Activated CD4-positive, alpha-beta T cell treated with anti-CD3 and anti-CD28 coated beads, Interleukin-2, amount 10 ng/mL, durations not matched to agents 7 days and 5 days (primary cell): ENCODE measurements at regions of chr6 and their contacts with region 1.

Region 1: DNA sequence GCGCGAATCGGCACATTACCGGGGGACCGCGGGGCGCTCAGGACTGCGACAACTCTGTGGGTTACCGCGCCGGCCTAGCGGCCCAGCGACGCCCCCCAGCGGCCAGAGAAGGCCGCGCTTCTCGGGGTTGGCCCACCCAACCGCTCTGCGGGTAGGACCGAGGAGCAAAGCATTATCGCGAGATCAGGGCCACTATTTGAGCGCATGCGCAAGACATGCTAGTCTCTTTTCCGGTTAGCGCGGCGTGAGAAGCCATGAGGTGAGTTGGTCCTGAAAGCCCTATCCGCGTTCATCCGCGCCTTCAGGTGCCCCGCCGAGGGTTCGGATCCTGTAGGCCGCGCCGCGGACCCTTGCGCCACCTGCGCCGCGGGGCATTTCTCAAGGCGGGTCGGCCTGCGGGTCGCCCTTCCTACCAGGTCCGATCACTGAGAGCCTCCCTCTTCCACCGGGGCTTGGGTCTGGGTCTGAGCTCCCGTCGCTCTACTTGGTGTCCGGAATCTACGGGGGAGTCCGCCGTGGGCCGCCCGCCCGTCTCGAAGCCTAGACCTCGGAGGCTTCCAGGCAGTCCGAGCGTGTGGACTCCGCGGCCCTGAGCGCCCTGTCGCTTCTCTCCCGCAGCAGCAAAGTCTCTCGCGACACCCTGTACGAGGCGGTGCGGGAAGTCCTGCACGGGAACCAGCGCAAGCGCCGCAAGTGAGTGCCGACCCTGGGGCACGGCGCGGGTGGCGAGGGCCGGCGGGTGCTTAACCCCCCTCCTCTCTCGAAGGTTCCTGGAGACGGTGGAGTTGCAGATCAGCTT is at the start of gene RPL10A:
- DNase-seq: peak; percentile 98
- H3K4me3 Mint-ChIP-seq: peak within 1 kb of the TSS; percentile 91
- H3K27ac Mint-ChIP-seq: peak within 1 kb of the TSS; percentile 100
- H3K4me1 Mint-ChIP-seq: peaks cover 42% of the 10 kb centered on the region
- H3K27me3 Mint-ChIP-seq: no peaks in the 10 kb centered on the region
- total RNA-seq, gene RPL10A: 1,411 to 1,499 TPM

Region 2: GRCh38 chr6:35480169-35480568 is 11.8 kb after region 1 on chr6:
- CTCF ChIA-PET with region 1: interaction called, 21 read pairs
- POLR2A ChIA-PET with region 1: interaction called, 6 read pairs
- DNase-seq: no peak
- H3K4me3 Mint-ChIP-seq: no peak overlapping the region
- H3K27ac Mint-ChIP-seq: no peak overlapping the region
- H3K4me1 Mint-ChIP-seq: peaks cover 3% of the 10 kb centered on the region
- H3K27me3 Mint-ChIP-seq: no peaks in the 10 kb centered on the region